H1 (cell line): ENCODE measurements at regions of chr11 and their contacts with region 1.

Region 1: GRCh38 chr11:134623711-134624110 is 211.7 kb upstream of the B3GAT1 start:
- DNase-seq: no peak
- H3K4me3 ChIP-seq: no peak overlapping the region
- H3K27ac ChIP-seq: no peak overlapping the region
- H3K4me1 ChIP-seq: no peaks in the 10 kb centered on the region
- H3K27me3 ChIP-seq: no peaks in the 10 kb centered on the region
- CTCF ChIP-seq: no peak
- EP300 ChIP-seq: no peak
- POLR2A ChIP-seq: no peak
- RAD21 ChIP-seq: no peak

Region 2: DNA sequence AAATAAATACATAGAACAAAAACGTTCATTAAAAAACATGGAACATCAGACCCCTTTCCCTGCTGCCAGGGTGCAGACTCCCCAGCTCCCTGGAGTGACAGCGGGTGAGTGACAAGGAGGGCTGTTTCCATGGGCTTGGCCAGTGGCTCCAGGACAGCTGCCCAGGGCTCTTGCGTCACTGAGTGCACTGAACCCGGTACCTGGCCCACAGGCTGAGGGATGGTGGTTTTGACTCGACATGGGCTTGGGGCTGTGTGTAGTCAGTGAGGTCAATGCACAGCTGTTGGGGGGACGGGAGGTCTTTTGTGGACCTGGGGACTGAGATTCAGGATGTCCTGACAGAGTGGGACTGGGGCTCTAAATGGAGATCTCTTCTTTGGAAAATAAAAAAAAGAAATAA is 69.6 kb before region 1 on chr11:
- CTCF ChIA-PET with region 1: no interaction called
- POLR2A ChIA-PET with region 1: no interaction called
- DNase-seq: peak in 1 of 2 experiments; percentile 35
- H3K4me3 ChIP-seq: no peak overlapping the region
- H3K27ac ChIP-seq: no peak overlapping the region
- H3K4me1 ChIP-seq: no peaks in the 10 kb centered on the region
- H3K27me3 ChIP-seq: no peaks in the 10 kb centered on the region
- CTCF ChIP-seq: no peak
- EP300 ChIP-seq: no peak
- POLR2A ChIP-seq: no peak
- RAD21 ChIP-seq: no peak

Region 3: DNA sequence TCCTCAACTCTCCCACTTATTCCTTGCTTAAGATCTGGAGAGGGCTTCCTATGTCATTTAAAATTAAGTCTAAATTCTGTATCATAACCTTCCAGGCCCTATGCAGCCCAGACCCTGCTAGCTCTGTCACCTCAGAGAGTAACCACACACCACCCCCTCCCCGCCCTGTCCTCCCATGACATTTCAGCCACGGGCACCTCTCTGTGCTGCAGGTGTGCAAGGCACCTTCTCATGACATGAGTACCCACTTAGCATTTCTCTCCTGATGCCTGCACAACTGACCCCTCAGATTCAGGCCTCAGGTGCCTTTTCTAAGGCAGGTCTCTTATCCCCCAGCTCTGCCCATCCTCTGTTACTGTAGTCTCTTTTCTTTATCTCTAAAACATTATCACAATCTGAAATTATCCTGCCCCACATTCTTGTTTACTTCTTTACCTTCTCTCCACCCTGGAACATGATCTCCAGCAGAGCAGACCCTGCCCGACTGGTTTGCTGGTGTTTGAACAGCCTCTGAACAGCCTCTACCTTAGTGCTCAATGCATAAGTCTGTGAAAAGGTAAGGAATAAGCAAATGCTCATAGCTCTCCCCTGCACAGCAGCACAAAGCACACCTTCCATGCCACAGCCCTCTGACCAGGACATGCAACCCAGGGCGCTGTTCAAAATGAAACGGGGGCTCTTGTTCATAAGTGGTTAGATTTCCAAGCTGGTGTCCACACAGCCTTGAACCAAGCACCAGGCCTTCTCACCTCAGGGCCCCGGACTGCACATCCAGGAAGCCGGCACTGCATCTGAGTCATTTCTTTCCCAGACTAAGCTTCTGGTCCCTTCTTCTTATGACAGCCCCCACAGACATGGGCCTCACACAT is 15.5 kb before region 1 on chr11:
- CTCF ChIA-PET with region 1: interaction called, 29 read pairs
- POLR2A ChIA-PET with region 1: no interaction called
- DNase-seq: peak in 1 of 2 experiments; percentile 35
- H3K4me3 ChIP-seq: no peak overlapping the region
- H3K27ac ChIP-seq: no peak overlapping the region
- H3K4me1 ChIP-seq: peaks cover 0 to 4% (median 2%) of the 10 kb centered on the region in 4 experiments; a peak in 4 of 7 replicates
- H3K27me3 ChIP-seq: no peaks in the 10 kb centered on the region
- CTCF ChIP-seq: no peak
- EP300 ChIP-seq: no peak
- POLR2A ChIP-seq: no peak
- RAD21 ChIP-seq: no peak

Region 4: GRCh38 chr11:134644476-134645456 is 21.1 kb after region 1 on chr11:
- CTCF ChIA-PET with region 1: no interaction called
- POLR2A ChIA-PET with region 1: no interaction called
- DNase-seq: peak in 1 of 2 experiments; percentile 51
- H3K4me3 ChIP-seq: no peak overlapping the region
- H3K27ac ChIP-seq: no peak overlapping the region
- H3K4me1 ChIP-seq: peaks cover 1 to 19% (median 4%) of the 10 kb centered on the region in 4 experiments; a peak in 6 of 7 replicates
- H3K27me3 ChIP-seq: peaks cover 0 to 2% (median 0%) of the 10 kb centered on the region in 4 experiments; a peak in 1 of 7 replicates
- CTCF ChIP-seq: no peak
- EP300 ChIP-seq: no peak
- POLR2A ChIP-seq: no peak
- RAD21 ChIP-seq: no peak